PC-9 (cell line): ENCODE measurements at regions of chr13 and their contacts with region 1.

Region 1: GRCh38 chr13:98353750-98354149 is 176.7 kb upstream of the RNF113B start:
- DNase-seq: peak in 1 of 2 experiments; percentile 42
- H3K4me3 ChIP-seq: no peak overlapping the region
- H3K27ac ChIP-seq: no peak overlapping the region
- H3K4me1 ChIP-seq: peaks cover 6% of the 10 kb centered on the region
- H3K27me3 ChIP-seq: no peaks in the 10 kb centered on the region
- CTCF ChIP-seq: no peak

Region 2: GRCh38 chr13:98123176-98123575 is 230.6 kb before region 1 on chr13:
- CTCF ChIA-PET with region 1: no interaction called
- POLR2A ChIA-PET with region 1: no interaction called
- intact Hi-C with region 1: no loop called
- DNase-seq: no peak
- H3K4me3 ChIP-seq: no peak overlapping the region
- H3K27ac ChIP-seq: no peak overlapping the region
- H3K4me1 ChIP-seq: no peaks in the 10 kb centered on the region
- H3K27me3 ChIP-seq: no peaks in the 10 kb centered on the region
- CTCF ChIP-seq: no peak

Region 3: DNA sequence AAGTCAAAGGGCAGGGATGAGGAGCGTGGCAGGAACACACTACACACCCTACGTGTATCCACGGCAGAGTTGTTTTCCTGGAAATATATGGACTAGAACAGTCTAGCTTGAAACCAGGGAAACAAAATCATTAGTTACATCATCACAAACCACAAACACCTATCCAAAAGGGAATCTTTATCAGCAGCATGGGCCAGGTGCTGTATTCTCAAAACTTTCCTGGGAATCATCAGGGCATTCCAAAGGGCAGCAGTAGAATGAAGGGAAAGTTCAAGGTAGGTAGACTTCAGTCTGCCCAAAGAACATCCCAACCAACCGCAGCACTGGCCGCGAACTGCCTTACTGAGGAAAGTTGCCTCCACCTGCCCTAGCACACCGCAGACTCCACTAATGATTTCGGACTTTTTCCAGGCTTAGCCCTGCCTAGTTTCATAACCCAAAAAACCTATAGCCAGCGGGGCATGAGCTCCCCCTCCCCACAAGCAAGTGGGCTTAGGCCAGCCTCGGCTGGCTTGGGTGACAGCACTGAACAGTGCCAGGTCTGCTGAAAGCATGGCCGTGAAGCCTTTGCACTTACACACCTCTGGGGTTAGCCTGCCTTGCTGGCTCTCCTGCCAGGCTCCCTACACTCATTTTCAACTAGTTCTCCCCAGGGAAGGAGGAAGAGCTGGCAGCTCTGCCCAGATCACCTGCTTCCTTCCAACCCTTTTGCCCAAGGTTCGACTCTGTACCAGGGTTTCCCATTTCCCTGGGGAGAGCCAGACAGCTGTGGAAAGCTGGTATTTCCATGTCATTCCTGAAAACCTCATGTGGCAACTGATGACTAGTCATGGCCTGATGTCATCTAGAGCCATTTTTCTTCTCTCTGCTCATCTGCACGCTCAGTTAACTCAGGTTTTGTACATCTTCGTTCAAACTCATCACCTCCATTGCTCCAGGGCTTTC is 769.6 kb after region 1 on chr13:
- CTCF ChIA-PET with region 1: no interaction called
- POLR2A ChIA-PET with region 1: interaction called, 12 read pairs
- intact Hi-C with region 1: no loop called
- DNase-seq: no peak
- H3K4me3 ChIP-seq: no peak overlapping the region
- H3K27ac ChIP-seq: no peak overlapping the region
- H3K4me1 ChIP-seq: peaks cover 11% of the 10 kb centered on the region; the same call in 1 of the 2 replicates
- H3K27me3 ChIP-seq: no peaks in the 10 kb centered on the region
- CTCF ChIP-seq: no peak